OCI-LY7 (cell line): ENCODE measurements at regions of chr5 and their contacts with region 1.

Region 1: DNA sequence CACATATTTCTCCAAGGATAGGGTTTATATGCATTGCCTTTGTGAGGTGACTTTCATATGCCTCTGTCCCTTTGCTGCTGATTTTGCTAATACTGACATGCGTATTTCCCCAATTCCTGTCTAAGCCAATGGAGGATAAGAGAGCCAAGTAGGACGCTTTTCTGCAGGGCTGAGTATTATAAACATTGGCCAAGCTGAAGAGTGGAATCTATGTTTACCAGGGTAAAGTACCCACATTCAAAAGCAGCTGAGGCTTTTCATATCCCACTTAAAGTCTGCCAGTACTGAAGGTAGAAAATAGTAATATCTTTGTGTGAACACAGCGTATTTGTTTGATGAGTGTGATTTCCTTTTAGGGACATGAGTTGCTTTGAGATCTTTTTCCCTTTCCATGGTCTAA is 128.8 kb upstream of the GPR151 start:
- DNase-seq: no peak
- H3K4me3 ChIP-seq: no peak overlapping the region
- H3K27ac ChIP-seq: no peak overlapping the region
- H3K4me1 ChIP-seq: no peaks in the 10 kb centered on the region
- CTCF ChIP-seq: no peak

Region 2: GRCh38 chr5:146620669-146621051 is 24.2 kb before region 1 on chr5:
- CTCF ChIA-PET with region 1: no interaction called
- POLR2A ChIA-PET with region 1: interaction called, 11 read pairs
- intact Hi-C with region 1: no loop called
- DNase-seq: no peak
- H3K4me3 ChIP-seq: no peak overlapping the region
- H3K27ac ChIP-seq: no peak overlapping the region
- H3K4me1 ChIP-seq: no peaks in the 10 kb centered on the region
- CTCF ChIP-seq: no peak

Region 3: GRCh38 chr5:146706321-146706975 is 61.6 kb after region 1 on chr5:
- CTCF ChIA-PET with region 1: no interaction called
- POLR2A ChIA-PET with region 1: no interaction called
- intact Hi-C with region 1: no loop called
- DNase-seq: peak; percentile 1
- H3K4me3 ChIP-seq: no peak overlapping the region
- H3K27ac ChIP-seq: no peak overlapping the region
- H3K4me1 ChIP-seq: no peaks in the 10 kb centered on the region
- CTCF ChIP-seq: peak; percentile 48